H1 (cell line): ENCODE measurements at regions of chr10 and their contacts with region 1.

Region 1: DNA sequence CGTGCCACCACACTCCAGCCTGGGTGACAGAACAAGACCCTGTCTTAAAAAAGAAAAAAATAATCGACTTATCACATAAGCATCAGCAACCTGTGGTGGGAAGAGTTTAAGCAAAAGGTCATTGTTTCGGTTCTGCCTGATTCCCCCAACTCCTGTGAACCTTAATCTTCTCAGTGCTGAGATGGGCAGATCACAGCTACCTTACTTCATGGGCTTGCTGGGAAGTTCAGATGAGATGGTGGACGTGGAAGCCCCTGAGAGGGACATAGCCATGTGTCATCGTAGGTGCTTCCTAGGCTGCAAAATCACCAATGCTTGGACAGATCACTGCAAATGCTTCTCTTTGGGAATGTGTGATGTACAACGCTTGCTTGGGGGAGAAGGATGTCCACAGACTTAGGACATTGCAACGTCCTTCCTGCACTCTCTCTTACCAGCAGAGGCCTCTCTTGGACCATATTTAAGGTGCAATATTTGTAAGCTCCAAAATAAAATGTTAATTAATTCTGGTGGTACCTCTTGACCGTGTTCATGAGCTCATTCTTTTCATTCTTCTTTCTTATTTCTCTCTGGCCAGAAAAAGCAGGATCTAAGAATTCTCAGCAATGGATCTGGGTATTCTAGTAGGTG is 8.6 kb downstream of the GJD4 start:
- DNase-seq: no peak
- H3K4me3 ChIP-seq: no peak overlapping the region
- H3K27ac ChIP-seq: no peak overlapping the region
- H3K4me1 ChIP-seq: no peaks in the 10 kb centered on the region
- H3K27me3 ChIP-seq: no peaks in the 10 kb centered on the region
- CTCF ChIP-seq: peak in 2 of 3 experiments; percentile 12 to 42; a peak in 2 of 4 replicates
- EP300 ChIP-seq: no peak
- POLR2A ChIP-seq: no peak
- RAD21 ChIP-seq: peak; percentile 65 to 66

Region 2: GRCh38 chr10:35600193-35600592 is 13.5 kb before region 1 on chr10:
- CTCF ChIA-PET with region 1: interaction called, 12 read pairs
- POLR2A ChIA-PET with region 1: no interaction called
- DNase-seq: no peak
- H3K4me3 ChIP-seq: no peak overlapping the region
- H3K27ac ChIP-seq: no peak overlapping the region
- H3K4me1 ChIP-seq: peaks cover 0 to 4% (median 2%) of the 10 kb centered on the region in 4 experiments; a peak in 3 of 7 replicates
- H3K27me3 ChIP-seq: no peaks in the 10 kb centered on the region
- CTCF ChIP-seq: peak in 2 of 3 experiments; percentile 20 to 26; a peak in 2 of 4 replicates
- EP300 ChIP-seq: no peak
- POLR2A ChIP-seq: no peak
- RAD21 ChIP-seq: peak in 1 of 2 experiments; percentile 5; a peak in 2 of 4 replicates

Region 3: DNA sequence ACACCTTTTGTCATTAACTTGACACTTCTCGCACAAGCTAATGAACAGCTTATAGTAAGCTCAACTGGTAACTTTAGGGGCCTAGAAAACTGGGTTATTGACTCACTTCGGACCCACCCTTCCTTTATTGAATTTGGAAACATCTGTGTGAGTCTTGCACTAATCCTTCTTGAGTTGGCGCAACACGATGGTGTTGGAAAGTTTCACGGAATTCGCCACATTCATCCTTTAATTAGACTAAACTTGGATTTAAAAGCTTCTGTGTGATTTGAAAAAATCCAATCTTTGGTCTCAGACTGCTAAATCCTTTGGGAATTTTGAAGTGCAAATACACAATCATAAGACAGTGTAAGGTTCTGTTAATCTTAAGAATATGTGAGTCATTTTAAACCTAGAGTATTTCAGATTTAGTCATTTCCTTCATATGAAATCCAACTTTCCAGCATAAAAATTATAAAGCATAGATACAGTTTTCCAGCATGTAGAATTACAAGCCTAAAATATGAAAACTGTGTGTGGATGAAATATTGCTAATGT is 13.3 kb after region 1 on chr10:
- CTCF ChIA-PET with region 1: interaction called, 59 read pairs
- POLR2A ChIA-PET with region 1: no interaction called
- DNase-seq: no peak
- H3K4me3 ChIP-seq: no peak overlapping the region
- H3K27ac ChIP-seq: no peak overlapping the region
- H3K4me1 ChIP-seq: no peaks in the 10 kb centered on the region
- H3K27me3 ChIP-seq: no peaks in the 10 kb centered on the region
- CTCF ChIP-seq: no peak
- EP300 ChIP-seq: no peak
- POLR2A ChIP-seq: no peak
- RAD21 ChIP-seq: no peak

Region 4: DNA sequence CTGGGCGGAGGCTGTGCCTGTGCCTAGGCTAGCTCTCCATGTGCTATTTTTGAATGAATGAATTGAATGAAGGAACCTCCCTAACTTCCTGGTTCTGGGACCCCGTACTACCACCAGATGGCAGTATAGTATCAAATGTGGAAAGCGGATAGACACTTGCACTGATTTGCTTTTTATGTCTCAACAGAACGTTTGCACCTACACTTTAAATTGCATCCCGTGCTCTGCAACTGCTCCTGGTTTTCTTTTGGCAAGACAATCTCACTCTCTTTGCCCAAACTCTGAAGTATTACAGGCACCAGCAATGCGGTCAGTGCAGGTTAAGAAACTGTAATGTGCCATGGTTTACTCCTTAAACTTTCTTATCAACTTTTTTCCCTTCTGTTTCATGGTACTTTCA is 21.9 kb after region 1 on chr10:
- CTCF ChIA-PET with region 1: interaction called, 59 read pairs
- POLR2A ChIA-PET with region 1: interaction called, 3 read pairs
- DNase-seq: peak in 1 of 2 experiments; percentile 62
- H3K4me3 ChIP-seq: no peak overlapping the region
- H3K27ac ChIP-seq: no peak overlapping the region
- H3K4me1 ChIP-seq: peaks cover 2 to 20% (median 13%) of the 10 kb centered on the region in 4 experiments
- H3K27me3 ChIP-seq: peaks cover 3 to 7% (median 5%) of the 10 kb centered on the region in 4 experiments; a peak in 6 of 7 replicates
- CTCF ChIP-seq: peak in 2 of 3 experiments; percentile 74 to 85; a peak in 3 of 4 replicates
- EP300 ChIP-seq: no peak
- POLR2A ChIP-seq: no peak
- RAD21 ChIP-seq: peak; percentile 97

Region 5: GRCh38 chr10:35768011-35768410 is 154.3 kb after region 1 on chr10:
- CTCF ChIA-PET with region 1: no interaction called
- POLR2A ChIA-PET with region 1: no interaction called
- DNase-seq: no peak
- H3K4me3 ChIP-seq: no peak overlapping the region
- H3K27ac ChIP-seq: no peak overlapping the region
- H3K4me1 ChIP-seq: peaks cover 4 to 7% (median 6%) of the 10 kb centered on the region in 4 experiments; a peak in 4 of 7 replicates
- H3K27me3 ChIP-seq: no peaks in the 10 kb centered on the region
- CTCF ChIP-seq: no peak
- EP300 ChIP-seq: no peak
- POLR2A ChIP-seq: no peak
- RAD21 ChIP-seq: no peak

Region 6: GRCh38 chr10:36779234-36779846 is 1165.6 kb after region 1 on chr10:
- CTCF ChIA-PET with region 1: interaction called, 17 read pairs
- POLR2A ChIA-PET with region 1: no interaction called
- DNase-seq: peak in 1 of 2 experiments; percentile 9
- H3K4me3 ChIP-seq: no peak overlapping the region
- H3K27ac ChIP-seq: no peak overlapping the region
- H3K4me1 ChIP-seq: no peaks in the 10 kb centered on the region
- H3K27me3 ChIP-seq: no peaks in the 10 kb centered on the region
- CTCF ChIP-seq: peak; percentile 14 to 75 (median 71)
- EP300 ChIP-seq: no peak
- POLR2A ChIP-seq: no peak
- RAD21 ChIP-seq: peak; percentile 94 to 96